ENCODE measurements at regions of chr12 and their contacts with region 1.

Region 1: GRCh38 chr12:26853303-26854030 is 20.5 kb upstream of the ITPR2 start:
- DNase-seq: peak; percentile 47 to 73 (median 69)
- ATAC-seq: peak; percentile 95
- H3K4me3 ChIP-seq: no peak overlapping the region
- H3K4me3 Mint-ChIP-seq: no peak overlapping the region
- H3K27ac ChIP-seq: no peak overlapping the region
- H3K27ac Mint-ChIP-seq: peak overlapping the region in 2 of 9 donors; percentile 1 to 81
- H3K4me1 ChIP-seq: no peaks in the 10 kb centered on the region
- H3K4me1 Mint-ChIP-seq: peaks cover 0 to 4% (median 0%) of the 10 kb centered on the region in 7 donors
- H3K27me3 ChIP-seq: no peaks in the 10 kb centered on the region
- H3K27me3 Mint-ChIP-seq: peaks cover 0 to 23% (median 0%) of the 10 kb centered on the region in 5 donors

Region 2: GRCh38 chr12:26810330-26810729 is 43.1 kb before region 1 on chr12:
- CTCF ChIA-PET with region 1: no interaction called
- POLR2A ChIA-PET with region 1: no interaction called
- intact Hi-C with region 1: no loop called
- DNase-seq: no peak
- ATAC-seq: no peak
- H3K4me3 ChIP-seq: no peak overlapping the region
- H3K4me3 Mint-ChIP-seq: no peak overlapping the region
- H3K27ac ChIP-seq: no peak overlapping the region
- H3K27ac Mint-ChIP-seq: peak overlapping the region in 3 of 9 donors; percentile 57 to 75 (median 74)
- H3K4me1 ChIP-seq: no peaks in the 10 kb centered on the region
- H3K4me1 Mint-ChIP-seq: peaks cover 21 to 29% (median 26%) of the 10 kb centered on the region in 7 donors
- H3K27me3 ChIP-seq: no peaks in the 10 kb centered on the region
- H3K27me3 Mint-ChIP-seq: no peaks in the 10 kb centered on the region

Region 3: GRCh38 chr12:26878661-26879119 is 25.2 kb after region 1 on chr12:
- CTCF ChIA-PET with region 1: interaction called, 3 read pairs
- POLR2A ChIA-PET with region 1: no interaction called
- intact Hi-C with region 1: loop called in 1 of 2 experiments (anchors 1 kb)
- DNase-seq: no peak
- ATAC-seq: no peak
- H3K4me3 ChIP-seq: no peak overlapping the region
- H3K4me3 Mint-ChIP-seq: no peak overlapping the region
- H3K27ac ChIP-seq: no peak overlapping the region
- H3K27ac Mint-ChIP-seq: peak overlapping the region in 1 of 9 donors; percentile 32
- H3K4me1 ChIP-seq: no peaks in the 10 kb centered on the region
- H3K4me1 Mint-ChIP-seq: peaks cover 0 to 3% (median 0%) of the 10 kb centered on the region in 7 donors
- H3K27me3 ChIP-seq: no peaks in the 10 kb centered on the region
- H3K27me3 Mint-ChIP-seq: peaks cover 0 to 26% (median 6%) of the 10 kb centered on the region in 5 donors

Region 4: DNA sequence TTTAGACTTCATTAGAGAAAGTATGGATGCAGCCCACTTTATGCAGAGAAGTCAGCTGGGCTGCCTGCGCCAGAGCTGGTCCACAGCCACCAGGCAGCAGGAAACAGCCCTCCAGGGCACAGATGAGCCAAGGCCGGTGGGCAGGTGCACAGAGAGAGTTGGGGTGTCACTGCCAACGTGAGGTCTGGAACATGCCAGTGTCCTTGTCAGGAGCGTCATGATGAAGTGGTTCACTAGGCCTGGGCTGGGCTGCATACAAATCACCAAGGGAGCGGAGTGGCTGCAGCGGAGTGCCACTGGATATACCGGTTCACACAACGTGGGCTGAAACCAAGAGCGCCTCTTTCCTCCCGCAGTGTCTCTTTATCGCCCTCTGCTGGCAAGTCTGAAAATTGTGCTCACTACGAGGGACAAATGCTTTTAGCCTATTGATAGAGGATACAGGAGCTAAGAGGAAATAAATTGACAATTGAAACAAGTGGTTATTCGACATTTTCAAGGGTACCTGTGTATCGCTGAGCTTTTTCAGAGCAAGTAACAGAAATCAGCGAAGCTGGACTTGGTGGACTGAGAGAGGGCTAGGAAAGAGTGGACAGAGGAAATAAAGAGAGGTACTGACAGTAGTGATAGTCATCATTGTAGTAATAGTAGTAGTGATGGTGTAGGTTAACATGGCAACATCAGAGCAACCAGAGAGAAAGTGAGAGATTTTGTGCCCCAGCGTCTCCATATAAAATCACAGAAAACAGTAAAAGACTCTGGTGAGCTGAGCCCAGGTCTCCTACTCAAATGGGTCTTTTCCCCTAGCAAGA is 31.5 kb after region 1 on chr12:
- CTCF ChIA-PET with region 1: interaction called, 3 read pairs
- POLR2A ChIA-PET with region 1: no interaction called
- intact Hi-C with region 1: loop called (anchors 1 kb)
- DNase-seq: peak; percentile 62 to 88 (median 81)
- ATAC-seq: peak; percentile 99
- H3K4me3 ChIP-seq: peak overlapping the region; percentile 46
- H3K4me3 Mint-ChIP-seq: peak overlapping the region; percentile 46 to 80 (median 64)
- H3K27ac ChIP-seq: no peak overlapping the region
- H3K27ac Mint-ChIP-seq: no peak overlapping the region
- H3K4me1 ChIP-seq: peaks cover 0 to 3% of the 10 kb centered on the region in 2 donors
- H3K4me1 Mint-ChIP-seq: peaks cover 4 to 13% (median 7%) of the 10 kb centered on the region in 7 donors
- H3K27me3 ChIP-seq: no peaks in the 10 kb centered on the region
- H3K27me3 Mint-ChIP-seq: peaks cover 3 to 26% (median 6%) of the 10 kb centered on the region in 5 donors

Region 5: GRCh38 chr12:27123642-27124041 is 270.2 kb after region 1 on chr12:
- CTCF ChIA-PET with region 1: no interaction called
- POLR2A ChIA-PET with region 1: no interaction called
- intact Hi-C with region 1: loop called in 1 of 2 experiments (anchors 1 kb)
- DNase-seq: no peak
- ATAC-seq: no peak
- H3K4me3 ChIP-seq: no peak overlapping the region
- H3K4me3 Mint-ChIP-seq: no peak overlapping the region
- H3K27ac ChIP-seq: no peak overlapping the region
- H3K27ac Mint-ChIP-seq: no peak overlapping the region
- H3K4me1 ChIP-seq: no peaks in the 10 kb centered on the region
- H3K4me1 Mint-ChIP-seq: peaks cover 0 to 2% (median 0%) of the 10 kb centered on the region in 7 donors
- H3K27me3 ChIP-seq: no peaks in the 10 kb centered on the region
- H3K27me3 Mint-ChIP-seq: peaks cover 0 to 5% (median 0%) of the 10 kb centered on the region in 5 donors

Region 6: DNA sequence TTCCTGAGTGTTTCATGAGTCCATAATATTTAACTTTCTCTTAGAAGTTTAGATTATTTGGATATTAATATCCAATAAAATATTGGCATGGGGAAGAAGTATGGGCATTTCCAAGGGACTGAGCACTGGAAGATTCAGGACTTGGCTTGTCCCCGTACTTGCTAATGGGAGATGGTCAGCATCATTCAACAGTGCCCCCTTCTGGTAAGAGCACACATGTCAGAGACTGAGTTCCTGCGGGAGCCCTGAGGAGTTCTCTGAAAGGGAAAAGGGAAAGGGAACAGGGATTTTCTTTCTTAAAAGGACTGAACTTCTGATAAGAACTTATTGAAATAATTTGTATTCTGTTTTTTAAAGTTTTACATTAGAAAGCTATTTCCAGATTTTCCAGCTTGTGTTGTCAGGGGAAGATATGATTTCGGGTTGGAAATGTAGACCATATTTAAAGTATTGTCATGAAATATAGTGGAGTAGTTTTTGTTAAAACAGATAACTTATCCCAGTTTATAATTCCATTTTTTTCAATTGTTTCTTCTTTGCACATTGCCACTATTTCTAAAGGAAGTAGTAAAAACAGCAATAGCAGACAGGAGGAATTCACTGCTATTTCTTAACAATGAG is 288.7 kb after region 1 on chr12:
- CTCF ChIA-PET with region 1: no interaction called
- POLR2A ChIA-PET with region 1: no interaction called
- intact Hi-C with region 1: loop called in 1 of 2 experiments (anchors 1 kb)
- DNase-seq: peak in 7 of 9 donors; percentile 7 to 32 (median 15)
- ATAC-seq: peak; percentile 80
- H3K4me3 ChIP-seq: no peak overlapping the region
- H3K4me3 Mint-ChIP-seq: no peak overlapping the region
- H3K27ac ChIP-seq: no peak overlapping the region
- H3K27ac Mint-ChIP-seq: no peak overlapping the region
- H3K4me1 ChIP-seq: no peaks in the 10 kb centered on the region
- H3K4me1 Mint-ChIP-seq: peaks cover 1 to 30% (median 11%) of the 10 kb centered on the region in 7 donors
- H3K27me3 ChIP-seq: no peaks in the 10 kb centered on the region
- H3K27me3 Mint-ChIP-seq: peaks cover 0 to 5% (median 0%) of the 10 kb centered on the region in 5 donors

Region 7: GRCh38 chr12:27424631-27425230 is 571.3 kb after region 1 on chr12:
- CTCF ChIA-PET with region 1: no interaction called
- POLR2A ChIA-PET with region 1: no interaction called
- intact Hi-C with region 1: no loop called
- DNase-seq: peak in 1 of 9 donors; percentile 8
- ATAC-seq: no peak
- H3K4me3 ChIP-seq: no peak overlapping the region
- H3K4me3 Mint-ChIP-seq: no peak overlapping the region
- H3K27ac ChIP-seq: no peak overlapping the region
- H3K27ac Mint-ChIP-seq: no peak overlapping the region
- H3K4me1 ChIP-seq: no peaks in the 10 kb centered on the region
- H3K4me1 Mint-ChIP-seq: peaks cover 0 to 13% (median 0%) of the 10 kb centered on the region in 7 donors
- H3K27me3 ChIP-seq: no peaks in the 10 kb centered on the region
- H3K27me3 Mint-ChIP-seq: no peaks in the 10 kb centered on the region